ENCODE measurements at regions of chr1 and their contacts with region 1.

Region 1: GRCh38 chr1:8671306-8671917 is 146.0 kb downstream of the RERE start:
- DNase-seq: peak; percentile 79
- H3K4me3 ChIP-seq: no peak overlapping the region
- H3K27ac ChIP-seq: no peak overlapping the region
- H3K4me1 ChIP-seq: peaks cover 32% of the 10 kb centered on the region
- H3K27me3 ChIP-seq: no peaks in the 10 kb centered on the region
- CTCF ChIP-seq: peak; percentile 66 to 78
- POLR2A ChIP-seq: no peak

Region 2: GRCh38 chr1:6672558-6672957 is 1998.9 kb before region 1 on chr1:
- CTCF ChIA-PET with region 1: no interaction called
- POLR2A ChIA-PET with region 1: no interaction called
- dilution Hi-C with region 1: no loop called
- intact Hi-C with region 1: no loop called
- DNase-seq: no peak
- H3K4me3 ChIP-seq: no peak overlapping the region
- H3K27ac ChIP-seq: no peak overlapping the region
- H3K4me1 ChIP-seq: no peaks in the 10 kb centered on the region
- H3K27me3 ChIP-seq: no peaks in the 10 kb centered on the region
- CTCF ChIP-seq: no peak
- POLR2A ChIP-seq: no peak

Region 3: DNA sequence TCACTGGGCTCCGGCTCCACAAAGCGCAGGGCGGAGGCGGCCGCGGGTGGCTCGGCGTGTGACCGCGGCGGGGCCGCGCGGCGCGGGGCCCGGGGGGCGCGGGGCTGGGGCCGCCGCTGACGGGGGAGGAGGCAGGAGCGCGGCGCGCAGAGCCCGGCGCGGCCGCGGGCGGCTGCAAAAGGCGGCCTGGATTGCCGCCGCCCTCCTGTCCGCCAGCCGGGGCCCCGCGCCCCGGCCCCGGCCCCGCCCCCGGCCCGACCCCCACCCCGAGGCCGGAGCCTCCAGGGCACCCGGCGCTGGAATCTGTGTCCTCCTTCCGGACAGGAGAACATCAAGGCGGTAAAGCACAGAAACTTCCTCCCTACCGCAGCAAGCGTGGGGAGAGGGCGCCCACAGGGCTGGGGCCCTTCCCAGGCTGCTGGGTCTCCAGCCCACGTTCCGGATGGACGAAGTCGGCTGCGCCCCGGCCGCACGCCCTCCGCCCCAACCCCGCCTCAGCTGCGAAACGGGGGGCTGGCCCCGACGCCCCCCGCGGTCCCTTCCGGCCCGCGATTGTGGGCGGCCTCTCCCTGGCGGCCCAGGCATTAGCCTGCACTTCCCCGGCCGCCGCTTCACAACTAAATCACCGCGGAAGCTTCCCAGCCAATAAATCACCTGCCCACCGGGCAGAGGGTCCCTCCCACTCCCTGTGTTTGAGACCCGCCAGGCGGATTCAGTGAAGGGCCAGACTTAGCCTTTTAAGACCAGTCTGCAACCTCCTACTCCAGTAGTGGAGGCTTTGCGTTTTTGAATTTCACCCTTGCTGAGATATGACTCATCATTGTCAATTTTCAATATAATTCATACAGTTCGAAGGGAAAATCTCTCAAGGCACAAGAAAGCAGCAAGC is 247.5 kb before region 1 on chr1:
- CTCF ChIA-PET with region 1: no interaction called
- POLR2A ChIA-PET with region 1: no interaction called
- dilution Hi-C with region 1: no loop called
- intact Hi-C with region 1: loop called (anchors 5 kb)
- DNase-seq: peak; percentile 75
- H3K4me3 ChIP-seq: peak overlapping the region; percentile 79 to 90 (median 87)
- H3K27ac ChIP-seq: peak overlapping the region; percentile 72
- H3K4me1 ChIP-seq: peaks cover 23% of the 10 kb centered on the region
- H3K27me3 ChIP-seq: no peaks in the 10 kb centered on the region
- CTCF ChIP-seq: no peak
- POLR2A ChIP-seq: no peak

Region 4: DNA sequence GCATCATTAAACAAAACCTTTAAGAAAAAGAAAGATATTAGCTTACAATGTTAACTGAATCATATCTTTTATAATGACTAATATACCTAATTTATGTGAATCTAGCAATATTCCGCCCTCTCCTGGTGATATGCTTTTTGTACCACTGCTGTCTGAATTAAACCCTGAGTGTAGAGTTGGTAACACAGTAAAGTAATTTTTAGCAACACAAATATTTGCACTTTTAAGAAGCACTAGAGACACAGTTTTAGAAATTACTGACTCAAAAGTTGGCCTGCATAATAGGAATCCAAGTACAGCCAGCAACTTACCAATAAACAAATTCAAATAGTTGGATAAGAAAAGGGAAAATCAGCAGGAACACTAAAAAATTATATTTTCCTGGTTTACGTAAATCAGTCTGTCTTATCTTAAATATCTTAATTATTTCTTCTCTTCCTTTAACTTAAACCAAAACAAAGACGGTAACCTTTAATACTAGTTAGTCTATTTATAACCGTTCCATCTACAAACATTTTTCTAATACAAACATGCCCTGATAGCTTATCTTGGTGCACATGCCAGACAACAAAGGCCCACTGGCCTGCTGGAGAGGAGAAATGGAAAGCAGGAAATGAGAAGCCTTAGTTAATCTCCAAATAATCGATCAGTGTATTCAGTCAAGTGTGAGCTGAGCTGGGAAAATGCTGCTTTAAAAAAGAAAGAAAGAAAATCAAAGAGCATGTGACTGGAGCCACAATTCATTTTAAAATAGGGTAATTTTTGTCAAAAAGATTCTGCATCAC is 100.0 kb before region 1 on chr1:
- CTCF ChIA-PET with region 1: interaction called, 32 read pairs
- POLR2A ChIA-PET with region 1: no interaction called
- dilution Hi-C with region 1: no loop called
- intact Hi-C with region 1: loop called (anchors 1 kb)
- DNase-seq: peak; percentile 94
- H3K4me3 ChIP-seq: peak overlapping the region in 1 of 3 experiments; percentile 19
- H3K27ac ChIP-seq: peak overlapping the region; percentile 93
- H3K4me1 ChIP-seq: peaks cover 27% of the 10 kb centered on the region
- H3K27me3 ChIP-seq: no peaks in the 10 kb centered on the region
- CTCF ChIP-seq: peak; percentile 28 to 61
- POLR2A ChIP-seq: peak; percentile 31

Region 5: DNA sequence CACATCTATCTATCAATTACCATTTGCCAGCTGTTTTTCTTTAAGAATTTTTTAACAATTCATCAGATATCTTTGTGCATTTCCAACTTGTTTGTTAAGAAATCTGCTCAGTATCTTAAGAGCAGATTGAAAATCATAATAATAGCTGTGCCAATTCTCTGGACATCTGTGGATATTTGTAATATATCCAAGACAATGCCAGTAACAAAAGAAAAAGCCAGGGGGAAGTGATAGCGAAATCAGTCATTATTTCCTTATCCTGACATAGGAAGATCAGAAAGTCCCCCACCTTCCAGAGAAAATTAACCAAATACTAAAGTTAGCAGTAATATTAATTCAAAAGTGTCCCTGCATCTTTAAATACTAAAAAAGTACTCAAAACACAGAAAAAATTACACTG is 71.1 kb before region 1 on chr1:
- CTCF ChIA-PET with region 1: interaction called, 7 read pairs
- POLR2A ChIA-PET with region 1: no interaction called
- dilution Hi-C with region 1: no loop called
- intact Hi-C with region 1: loop called (anchors 2 kb)
- DNase-seq: peak; percentile 94
- H3K4me3 ChIP-seq: no peak overlapping the region
- H3K27ac ChIP-seq: peak overlapping the region; percentile 84
- H3K4me1 ChIP-seq: peaks cover 50% of the 10 kb centered on the region
- H3K27me3 ChIP-seq: no peaks in the 10 kb centered on the region
- CTCF ChIP-seq: no peak
- POLR2A ChIP-seq: no peak

Region 6: GRCh38 chr1:8687039-8687438 is 15.6 kb after region 1 on chr1:
- CTCF ChIA-PET with region 1: interaction called, 10 read pairs
- POLR2A ChIA-PET with region 1: no interaction called
- dilution Hi-C with region 1: no loop called
- intact Hi-C with region 1: no loop called
- DNase-seq: peak; percentile 95
- H3K4me3 ChIP-seq: no peak overlapping the region
- H3K27ac ChIP-seq: peak overlapping the region; percentile 74
- H3K4me1 ChIP-seq: peaks cover 19% of the 10 kb centered on the region
- H3K27me3 ChIP-seq: no peaks in the 10 kb centered on the region
- CTCF ChIP-seq: no peak
- POLR2A ChIP-seq: no peak

Region 7: DNA sequence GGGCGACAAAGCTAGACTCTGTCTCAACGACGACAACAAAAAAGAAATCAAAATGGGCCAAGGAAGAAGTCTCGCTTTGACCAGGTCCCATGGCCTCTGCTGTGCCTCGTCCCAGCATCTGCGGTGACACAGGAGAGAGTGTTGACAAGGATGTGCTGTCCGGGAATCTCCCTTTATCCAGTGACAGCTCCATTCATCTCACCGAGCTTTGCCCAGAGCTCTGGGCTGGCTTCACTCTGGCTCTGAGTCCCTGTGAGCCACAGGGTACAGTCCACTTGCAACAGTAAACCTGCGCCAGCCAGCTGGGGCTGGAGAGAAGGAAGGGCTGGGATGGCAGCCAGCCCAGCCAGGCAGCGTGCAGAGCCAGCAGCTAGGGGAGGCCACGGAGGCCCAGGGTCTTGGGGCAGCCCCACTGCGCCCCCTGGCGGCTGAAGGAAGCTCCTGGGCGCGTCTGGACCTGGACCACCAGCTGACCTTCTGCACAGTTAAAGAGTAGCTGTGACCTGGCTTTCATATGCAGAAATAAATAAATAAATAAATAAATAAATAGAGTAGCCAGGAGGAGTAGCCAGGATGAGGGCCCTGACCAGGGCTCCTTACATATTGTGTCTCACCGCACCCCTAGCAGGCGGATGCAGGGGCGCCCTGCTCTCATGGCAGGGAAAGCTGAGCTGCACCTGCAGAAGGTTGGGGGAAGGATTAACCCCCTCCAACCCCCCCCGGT is 177.4 kb after region 1 on chr1:
- CTCF ChIA-PET with region 1: interaction called, 19 read pairs
- POLR2A ChIA-PET with region 1: no interaction called
- dilution Hi-C with region 1: no loop called
- intact Hi-C with region 1: loop called (anchors 5 kb)
- DNase-seq: peak; percentile 94
- H3K4me3 ChIP-seq: no peak overlapping the region
- H3K27ac ChIP-seq: no peak overlapping the region
- H3K4me1 ChIP-seq: peaks cover 4% of the 10 kb centered on the region
- H3K27me3 ChIP-seq: no peaks in the 10 kb centered on the region
- CTCF ChIP-seq: peak; percentile 85 to 99
- POLR2A ChIP-seq: no peak